PC-3 (cell line): ENCODE measurements at regions of chrX and their contacts with region 1.

Region 1: GRCh38 chrX:9352694-9353411 is 112.0 kb upstream of the TBL1X start:
- DNase-seq: peak; percentile 39
- ATAC-seq: no peak
- H3K4me3 ChIP-seq: peak overlapping the region; percentile 41; the same call in 1 of the 2 replicates
- H3K27ac ChIP-seq: peak overlapping the region; percentile 76
- H3K4me1 ChIP-seq: peaks cover 38% of the 10 kb centered on the region
- H3K27me3 ChIP-seq: no peaks in the 10 kb centered on the region
- CTCF ChIP-seq: no peak

Region 2: DNA sequence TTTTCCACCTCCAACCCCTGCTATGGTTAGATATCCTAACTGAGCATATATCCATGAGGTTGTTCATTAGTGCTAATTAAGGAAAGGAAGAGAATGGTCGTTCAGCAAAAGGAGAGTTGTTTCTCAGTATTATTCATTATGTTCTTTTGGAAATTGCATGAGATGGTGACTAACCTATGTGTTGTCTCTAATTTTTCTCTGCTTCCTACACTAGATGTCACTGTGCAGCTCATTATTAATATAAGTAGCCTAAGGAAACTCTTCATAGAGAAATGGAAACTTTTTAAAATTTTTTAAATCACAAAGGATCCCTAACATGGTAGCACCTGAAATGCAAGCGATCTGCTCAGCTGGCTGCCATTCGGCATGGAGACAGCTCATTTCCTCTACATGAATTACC is 483.9 kb before region 1 on chrX:
- CTCF ChIA-PET with region 1: no interaction called
- POLR2A ChIA-PET with region 1: no interaction called
- intact Hi-C with region 1: loop called (anchors 2 kb)
- DNase-seq: peak; percentile 57
- ATAC-seq: peak; percentile 70
- H3K4me3 ChIP-seq: peak overlapping the region; percentile 57
- H3K27ac ChIP-seq: peak overlapping the region; percentile 100
- H3K4me1 ChIP-seq: peaks cover 44% of the 10 kb centered on the region
- H3K27me3 ChIP-seq: no peaks in the 10 kb centered on the region
- CTCF ChIP-seq: peak; percentile 64

Region 3: DNA sequence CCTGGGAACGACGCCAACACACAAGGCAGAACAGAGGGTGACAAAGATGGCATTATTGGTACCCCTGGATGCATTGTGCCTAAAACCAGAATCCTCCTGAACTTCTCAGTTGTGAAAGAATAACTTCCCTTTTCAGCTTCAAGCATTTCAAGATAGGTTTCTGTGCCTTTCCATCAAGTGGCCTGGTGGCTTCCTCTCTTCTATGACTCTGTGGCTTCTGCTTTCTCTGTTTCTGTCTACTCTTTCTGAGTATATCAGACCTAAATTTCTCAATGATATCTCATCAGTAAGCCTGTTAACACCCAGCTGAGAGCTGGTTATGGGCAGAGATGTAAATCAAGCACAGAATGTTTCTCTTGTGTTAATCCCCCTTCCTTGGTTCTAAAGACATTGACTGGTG is 297.5 kb before region 1 on chrX:
- CTCF ChIA-PET with region 1: interaction called, 10 read pairs
- POLR2A ChIA-PET with region 1: no interaction called
- intact Hi-C with region 1: no loop called
- DNase-seq: no peak
- ATAC-seq: no peak
- H3K4me3 ChIP-seq: no peak overlapping the region
- H3K27ac ChIP-seq: no peak overlapping the region
- H3K4me1 ChIP-seq: no peaks in the 10 kb centered on the region
- H3K27me3 ChIP-seq: no peaks in the 10 kb centered on the region
- CTCF ChIP-seq: no peak

Region 4: DNA sequence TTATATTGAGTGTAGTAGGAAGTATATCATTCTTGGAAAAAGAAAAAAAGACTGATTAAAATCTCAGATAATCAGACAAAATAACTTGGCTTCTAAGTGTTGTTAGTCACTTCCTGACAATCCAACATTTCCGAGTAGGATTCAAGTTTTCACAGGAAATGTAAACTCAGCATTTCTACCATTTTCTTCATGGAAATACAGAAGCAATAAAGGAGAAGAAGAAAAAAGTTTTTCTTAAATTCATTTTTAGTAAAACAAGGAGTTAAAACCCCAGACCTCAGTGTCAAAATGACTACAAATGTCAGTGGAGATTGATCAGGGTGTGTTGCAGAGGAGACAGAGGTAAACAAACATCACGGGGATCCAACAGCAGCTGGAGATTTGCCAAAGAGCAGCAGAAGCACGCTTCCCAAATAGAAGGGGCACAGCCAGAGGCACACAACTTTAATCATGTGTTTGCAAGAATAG is 189.6 kb before region 1 on chrX:
- CTCF ChIA-PET with region 1: no interaction called
- POLR2A ChIA-PET with region 1: no interaction called
- intact Hi-C with region 1: loop called (anchors 2 kb)
- DNase-seq: peak; percentile 79
- ATAC-seq: peak; percentile 56
- H3K4me3 ChIP-seq: peak overlapping the region; percentile 28; the same call in 1 of the 2 replicates
- H3K27ac ChIP-seq: peak overlapping the region; percentile 98
- H3K4me1 ChIP-seq: peaks cover 55% of the 10 kb centered on the region
- H3K27me3 ChIP-seq: no peaks in the 10 kb centered on the region
- CTCF ChIP-seq: no peak

Region 5: GRCh38 chrX:9662148-9662547 is 309.3 kb after region 1 on chrX:
- CTCF ChIA-PET with region 1: no interaction called
- POLR2A ChIA-PET with region 1: no interaction called
- intact Hi-C with region 1: no loop called
- DNase-seq: peak; percentile 87
- ATAC-seq: peak; percentile 83
- H3K4me3 ChIP-seq: no peak overlapping the region
- H3K27ac ChIP-seq: peak overlapping the region; percentile 89
- H3K4me1 ChIP-seq: peaks cover 57% of the 10 kb centered on the region
- H3K27me3 ChIP-seq: no peaks in the 10 kb centered on the region
- CTCF ChIP-seq: no peak